CD8-positive, alpha-beta T cell (primary cell): ENCODE measurements at regions of chr7 and their contacts with region 1.

Region 1: DNA sequence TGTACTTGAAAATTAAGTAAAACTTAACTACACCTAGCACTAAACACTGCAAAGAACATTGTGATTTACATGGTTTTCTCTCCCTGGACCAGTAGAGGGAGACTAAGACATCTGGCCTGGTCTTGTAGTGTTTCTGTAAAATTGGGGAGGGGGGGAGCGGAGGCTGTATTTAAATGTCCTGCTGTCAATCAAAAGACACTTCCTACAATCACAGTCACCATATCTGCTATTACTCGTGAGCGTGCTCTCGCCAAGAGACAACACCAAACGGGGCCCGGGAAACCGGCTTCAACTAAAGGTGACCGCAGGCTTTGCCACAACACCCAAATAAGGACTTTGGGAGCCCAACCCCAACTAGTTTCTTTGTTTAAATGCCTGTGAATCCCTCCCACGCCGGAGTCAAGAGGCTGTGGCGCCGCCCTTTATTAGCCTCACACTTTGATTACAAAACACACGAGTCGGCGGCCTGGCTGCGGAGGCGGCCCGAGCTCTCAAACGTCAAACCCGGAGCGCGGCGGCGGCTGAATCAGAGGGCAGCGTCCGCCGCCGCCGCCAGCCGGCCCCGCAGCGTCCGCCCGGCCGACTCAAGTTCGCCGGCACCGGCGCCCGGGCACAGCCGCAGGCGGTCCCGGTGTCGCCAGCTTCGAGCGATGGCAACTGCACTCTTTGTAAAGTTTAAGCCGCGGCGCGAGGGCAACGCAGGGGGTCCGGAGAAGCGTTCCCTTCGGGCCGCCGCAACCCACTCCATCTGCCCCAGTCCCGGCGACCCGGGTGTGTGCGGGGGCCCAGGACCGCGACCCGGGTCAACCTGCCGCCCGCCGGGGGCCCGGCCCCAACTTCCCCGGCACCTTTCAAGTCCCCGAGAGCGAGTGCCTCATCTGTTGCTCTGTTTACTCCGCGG is 1.3 kb downstream of the KDM7A start:
- DNase-seq: peak; percentile 76 to 98 (median 90)
- ATAC-seq: peak; percentile 66
- H3K4me3 ChIP-seq: peak overlapping the region; percentile 54 to 69
- H3K4me3 Mint-ChIP-seq: peak overlapping the region; percentile 87
- H3K27ac ChIP-seq: peak overlapping the region; percentile 80 to 93
- H3K27ac Mint-ChIP-seq: peak overlapping the region; percentile 96
- H3K4me1 ChIP-seq: peaks cover 33% of the 10 kb centered on the region
- H3K4me1 Mint-ChIP-seq: peaks cover 42% of the 10 kb centered on the region
- H3K27me3 ChIP-seq: no peaks in the 10 kb centered on the region
- H3K27me3 Mint-ChIP-seq: no peaks in the 10 kb centered on the region
- CTCF ChIP-seq: peak; percentile 82

Region 2: GRCh38 chr7:139080905-139081304 is 1094.6 kb before region 1 on chr7:
- CTCF ChIA-PET with region 1: no interaction called
- POLR2A ChIA-PET with region 1: no interaction called
- intact Hi-C with region 1: loop called in 1 of 2 experiments (anchors 10 kb)
- DNase-seq: no peak
- ATAC-seq: no peak
- H3K4me3 ChIP-seq: peak overlapping the region in 1 of 2 experiments; percentile 4
- H3K4me3 Mint-ChIP-seq: peak overlapping the region; percentile 58
- H3K27ac ChIP-seq: peak overlapping the region in 1 of 2 experiments; percentile 22
- H3K27ac Mint-ChIP-seq: peak overlapping the region; percentile 66
- H3K4me1 ChIP-seq: peaks cover 87% of the 10 kb centered on the region
- H3K4me1 Mint-ChIP-seq: peaks cover 86% of the 10 kb centered on the region
- H3K27me3 ChIP-seq: no peaks in the 10 kb centered on the region
- H3K27me3 Mint-ChIP-seq: no peaks in the 10 kb centered on the region
- CTCF ChIP-seq: no peak

Region 3: DNA sequence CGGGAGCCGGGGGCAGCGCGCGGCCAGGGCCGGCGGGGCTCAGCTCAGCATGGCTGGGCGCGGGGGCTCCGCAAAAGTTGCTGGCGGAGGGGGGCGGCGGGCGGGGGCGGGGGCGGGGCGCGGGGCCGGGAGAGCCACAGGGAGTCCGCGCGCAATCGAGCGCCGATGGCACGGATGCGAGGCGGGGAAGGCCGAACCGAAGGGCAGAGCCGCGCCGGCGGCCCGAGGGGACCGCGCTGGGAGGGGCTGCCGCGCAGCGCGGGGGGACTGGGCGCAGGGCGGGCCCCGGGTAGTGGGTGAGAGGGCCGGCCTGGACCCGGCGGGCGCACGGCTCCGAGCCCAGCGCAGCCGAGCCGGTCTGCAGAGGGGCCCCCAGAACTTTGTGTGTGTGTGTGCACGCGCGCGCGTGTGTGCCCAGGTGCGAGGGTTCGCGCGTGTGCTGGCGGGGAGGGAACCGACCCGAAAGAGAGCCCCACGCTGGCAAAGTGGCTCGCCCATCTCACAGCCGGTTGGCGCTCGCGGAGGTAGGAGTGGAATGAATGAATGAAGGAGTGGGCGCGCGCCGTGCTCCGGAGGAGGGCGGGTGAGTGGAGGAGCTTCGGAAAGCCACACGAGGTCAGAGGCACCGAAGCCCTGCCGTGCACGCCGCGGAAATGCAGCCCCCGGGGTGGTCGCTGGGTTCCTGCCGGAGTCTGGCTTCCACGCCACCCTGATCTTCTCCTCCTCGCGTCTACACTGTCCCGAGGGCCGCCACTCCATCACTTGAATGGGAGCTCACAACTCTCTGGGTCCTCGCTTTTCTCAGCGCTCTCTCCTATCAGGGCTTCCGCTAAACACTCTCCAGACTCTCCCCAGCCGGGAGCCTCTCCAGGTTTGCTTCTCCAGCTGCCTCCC is 397.3 kb before region 1 on chr7 and contains the start of gene HIPK2:
- CTCF ChIA-PET with region 1: no interaction called
- POLR2A ChIA-PET with region 1: no interaction called
- intact Hi-C with region 1: loop called (anchors 1 to 5 kb)
- DNase-seq: peak; percentile 40 to 84 (median 72)
- ATAC-seq: peak; percentile 60
- H3K4me3 ChIP-seq: peak within 1 kb of the TSS; percentile 73
- H3K4me3 Mint-ChIP-seq: peak within 1 kb of the TSS; percentile 98
- H3K27ac ChIP-seq: peak within 1 kb of the TSS; percentile 62 to 70
- H3K27ac Mint-ChIP-seq: peak within 1 kb of the TSS; percentile 96
- H3K4me1 ChIP-seq: peaks cover 35% of the 10 kb centered on the region
- H3K4me1 Mint-ChIP-seq: peaks cover 45% of the 10 kb centered on the region
- H3K27me3 ChIP-seq: no peaks in the 10 kb centered on the region
- H3K27me3 Mint-ChIP-seq: peaks cover 5% of the 10 kb centered on the region
- CTCF ChIP-seq: no peak
- total RNA-seq, gene HIPK2: 19.8 to 21.3 TPM

Region 4: DNA sequence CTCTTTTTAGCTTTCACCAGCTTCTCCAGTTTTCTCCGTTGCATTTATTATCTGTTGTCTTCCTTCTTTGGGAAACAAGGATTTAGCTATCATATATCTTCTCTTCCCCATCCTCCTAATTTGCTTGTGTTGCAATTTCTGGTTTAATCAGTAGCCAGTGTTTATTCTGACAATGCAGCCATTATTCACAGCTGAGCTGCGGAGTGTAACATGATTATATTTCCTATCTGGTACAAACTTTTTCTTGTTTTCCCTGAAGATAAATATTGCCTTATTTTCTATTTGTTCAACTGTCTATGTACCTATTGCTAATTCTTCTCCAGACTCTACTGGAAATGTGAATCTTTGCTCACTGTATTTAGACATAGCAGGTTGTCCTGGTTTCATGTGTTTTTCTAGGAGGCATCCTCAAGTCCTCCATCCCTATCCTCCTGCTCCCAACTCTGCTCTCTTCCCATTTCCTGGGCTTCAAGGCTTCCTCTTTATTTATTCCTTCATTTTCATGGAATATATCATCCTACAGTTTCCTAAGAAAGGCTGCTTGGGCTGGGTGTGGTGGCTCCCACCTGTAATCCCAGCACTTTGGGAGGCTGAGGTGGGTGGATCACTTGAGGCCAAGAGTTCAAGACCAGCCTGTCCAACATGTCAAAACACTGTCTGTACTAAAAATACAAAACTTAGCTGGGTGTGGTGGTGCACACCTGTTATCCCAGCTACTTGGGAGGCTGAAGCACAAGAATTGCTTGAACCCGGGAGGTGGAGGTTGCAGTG is 73.8 kb after region 1 on chr7:
- CTCF ChIA-PET with region 1: no interaction called
- POLR2A ChIA-PET with region 1: interaction called, 19 read pairs
- intact Hi-C with region 1: no loop called
- DNase-seq: no peak
- ATAC-seq: no peak
- H3K4me3 ChIP-seq: no peak overlapping the region
- H3K4me3 Mint-ChIP-seq: no peak overlapping the region
- H3K27ac ChIP-seq: no peak overlapping the region
- H3K27ac Mint-ChIP-seq: no peak overlapping the region
- H3K4me1 ChIP-seq: peaks cover 12% of the 10 kb centered on the region
- H3K4me1 Mint-ChIP-seq: peaks cover 14% of the 10 kb centered on the region
- H3K27me3 ChIP-seq: no peaks in the 10 kb centered on the region
- H3K27me3 Mint-ChIP-seq: no peaks in the 10 kb centered on the region
- CTCF ChIP-seq: no peak

Region 5: GRCh38 chr7:140326116-140326928 is 150.9 kb after region 1 on chr7:
- CTCF ChIA-PET with region 1: interaction called, 4 read pairs
- POLR2A ChIA-PET with region 1: no interaction called
- intact Hi-C with region 1: loop called in 1 of 2 experiments (anchors 1 kb)
- DNase-seq: peak; percentile 13 to 66 (median 50)
- ATAC-seq: peak; percentile 79
- H3K4me3 ChIP-seq: no peak overlapping the region
- H3K4me3 Mint-ChIP-seq: no peak overlapping the region
- H3K27ac ChIP-seq: no peak overlapping the region
- H3K27ac Mint-ChIP-seq: no peak overlapping the region
- H3K4me1 ChIP-seq: peaks cover 8% of the 10 kb centered on the region
- H3K4me1 Mint-ChIP-seq: no peaks in the 10 kb centered on the region
- H3K27me3 ChIP-seq: no peaks in the 10 kb centered on the region
- H3K27me3 Mint-ChIP-seq: no peaks in the 10 kb centered on the region
- CTCF ChIP-seq: peak; percentile 57

Region 6: DNA sequence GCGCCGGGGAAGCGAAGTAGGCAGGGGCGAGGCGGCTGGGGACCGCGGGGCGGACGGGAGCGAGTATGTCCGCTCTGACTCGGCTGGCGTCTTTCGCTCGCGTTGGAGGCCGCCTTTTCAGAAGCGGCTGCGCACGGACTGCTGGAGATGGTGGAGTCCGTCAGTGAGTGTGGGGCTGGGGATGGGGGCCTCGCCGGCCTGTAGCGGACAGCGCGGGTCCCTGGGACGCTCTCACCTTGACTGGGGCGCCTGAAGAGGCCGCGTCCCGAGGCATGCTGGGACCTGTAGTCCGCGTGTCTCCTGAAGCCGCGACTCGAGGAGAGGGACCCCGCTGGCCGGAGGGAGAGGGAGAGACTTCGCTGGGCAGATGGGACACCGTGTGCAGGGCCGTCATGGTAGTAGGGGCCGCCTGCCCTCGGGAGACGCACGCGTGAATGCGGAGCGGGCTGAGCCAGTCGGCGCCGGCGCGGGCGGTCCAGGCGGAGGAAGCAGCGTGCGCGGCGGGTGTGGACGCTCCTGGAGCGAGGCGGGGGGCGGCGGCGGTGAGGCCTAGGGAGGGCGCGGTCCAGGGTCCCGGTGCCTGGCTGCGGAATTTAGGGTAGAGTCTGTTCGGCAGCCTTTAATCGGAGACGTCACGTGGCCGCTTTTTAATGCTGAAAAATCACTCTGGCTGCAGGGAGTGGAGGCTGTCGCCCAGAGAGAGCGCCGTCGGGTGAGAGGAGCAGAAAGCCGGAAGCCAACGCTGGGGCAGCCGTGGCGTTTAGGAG is 521.4 kb after region 1 on chr7 and contains the start of gene NDUFB2:
- CTCF ChIA-PET with region 1: no interaction called
- POLR2A ChIA-PET with region 1: no interaction called
- intact Hi-C with region 1: loop called in 1 of 2 experiments (anchors 10 kb)
- DNase-seq: peak in 8 of 9 experiments; percentile 30 to 85 (median 64)
- ATAC-seq: peak; percentile 87
- H3K4me3 ChIP-seq: peak within 1 kb of the TSS; percentile 96 to 100
- H3K4me3 Mint-ChIP-seq: peak within 1 kb of the TSS; percentile 97
- H3K27ac ChIP-seq: peak within 1 kb of the TSS; percentile 96
- H3K27ac Mint-ChIP-seq: peak within 1 kb of the TSS; percentile 99
- H3K4me1 ChIP-seq: peaks cover 19% of the 10 kb centered on the region
- H3K4me1 Mint-ChIP-seq: peaks cover 45% of the 10 kb centered on the region
- H3K27me3 ChIP-seq: no peaks in the 10 kb centered on the region
- H3K27me3 Mint-ChIP-seq: no peaks in the 10 kb centered on the region
- CTCF ChIP-seq: no peak
- total RNA-seq, gene NDUFB2: 83.9 to 84.5 TPM